GM18951 (cell line): ENCODE measurements at regions of chr6 and their contacts with region 1.

Region 1: GRCh38 chr6:27157459-27158315 is 89.8 kb upstream of the PRSS16 start:
- POLR2A ChIP-seq: no peak

Region 2: DNA sequence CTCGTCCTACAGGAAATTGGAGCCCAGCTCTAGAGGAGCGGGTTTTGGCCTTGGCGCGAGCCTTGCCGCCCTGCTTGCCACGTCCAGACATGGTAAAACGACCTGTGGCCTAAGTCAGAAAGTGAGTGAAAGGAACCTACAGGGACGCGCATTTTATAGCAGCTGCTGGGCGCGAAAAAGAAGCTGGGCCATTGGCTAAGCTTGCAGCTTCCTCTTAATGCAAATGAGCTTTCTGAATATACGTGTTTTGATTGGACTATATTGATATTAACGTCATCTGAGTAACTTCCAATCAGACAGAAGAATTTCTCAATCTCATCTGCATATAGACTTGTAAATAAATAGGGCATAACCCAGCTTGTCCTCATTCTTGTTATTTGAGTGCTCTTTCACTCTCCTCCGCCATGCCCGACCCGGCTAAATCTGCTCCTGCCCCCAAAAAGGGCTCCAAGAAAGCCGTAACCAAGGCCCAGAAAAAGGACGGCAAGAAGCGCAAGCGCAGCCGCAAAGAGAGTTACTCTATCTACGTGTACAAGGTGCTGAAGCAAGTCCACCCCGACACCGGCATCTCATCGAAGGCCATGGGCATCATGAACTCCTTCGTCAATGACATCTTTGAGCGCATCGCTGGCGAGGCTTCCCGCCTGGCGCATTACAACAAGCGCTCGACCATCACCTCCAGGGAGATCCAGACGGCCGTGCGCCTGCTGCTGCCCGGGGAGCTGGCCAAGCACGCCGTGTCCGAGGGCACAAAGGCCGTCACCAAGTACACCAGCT is 735.6 kb after region 1 on chr6:
- in situ Hi-C with region 1: loop called (anchors 10 kb)
- POLR2A ChIP-seq: peak; percentile 100